ENCODE measurements at regions of chr16 and their contacts with region 1.

Region 1: DNA sequence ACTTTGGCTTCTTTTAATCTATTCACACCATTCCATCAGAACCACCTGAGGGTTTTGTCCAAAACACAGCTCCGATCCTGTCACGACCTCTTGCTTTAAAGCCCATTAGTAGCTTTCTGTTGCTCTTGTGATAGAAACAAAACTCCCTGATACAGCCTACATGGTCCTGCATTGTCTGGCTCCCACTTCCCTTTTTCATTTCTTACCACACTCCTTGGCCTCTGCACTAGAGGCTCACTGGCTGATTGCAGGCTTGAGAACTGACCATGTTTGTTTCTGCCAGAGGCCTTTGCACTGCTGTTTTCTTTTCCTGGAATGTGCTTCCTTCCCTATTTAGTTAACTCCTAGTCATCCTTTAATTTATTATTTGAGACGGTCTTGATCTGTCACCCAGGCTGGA is 23.7 kb downstream of the IST1 start:
- DNase-seq: peak in 2 of 3 donors; percentile 40 to 45
- H3K4me3 ChIP-seq: peak overlapping the region in 1 of 7 experiments; percentile 15
- H3K27ac ChIP-seq: no peak overlapping the region
- H3K4me1 ChIP-seq: peaks cover 0 to 4% (median under 1%) of the 10 kb centered on the region in 4 experiments
- H3K27me3 ChIP-seq: no peaks in the 10 kb centered on the region

Region 2: DNA sequence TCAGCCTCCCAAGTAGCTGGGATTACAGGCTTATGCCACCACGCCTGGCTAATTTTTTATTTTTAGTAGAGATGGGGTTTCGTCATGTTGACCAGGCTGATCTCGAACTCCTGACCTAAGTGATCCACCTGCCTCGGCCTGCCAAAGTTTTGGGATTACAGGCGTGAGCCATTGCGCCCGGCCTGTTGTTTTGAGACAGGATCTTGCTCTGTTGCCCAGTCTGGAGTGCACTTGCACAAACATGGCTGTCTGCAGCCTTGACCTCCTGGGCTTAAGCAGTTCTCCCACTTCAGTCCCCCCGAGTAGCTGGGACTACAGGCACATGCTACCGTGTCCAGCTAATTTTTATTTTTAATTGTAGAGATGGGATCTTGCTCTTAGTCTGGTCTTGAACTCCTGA is 14.8 kb before region 1 on chr16:
- CTCF ChIA-PET with region 1: interaction called, 16 read pairs
- POLR2A ChIA-PET with region 1: interaction called, 3 read pairs
- DNase-seq: no peak
- H3K4me3 ChIP-seq: no peak overlapping the region
- H3K27ac ChIP-seq: no peak overlapping the region
- H3K4me1 ChIP-seq: peaks cover 0 to 34% (median 18%) of the 10 kb centered on the region in 4 experiments
- H3K27me3 ChIP-seq: no peaks in the 10 kb centered on the region

Region 3: GRCh38 chr16:71929048-71929447 is 10.0 kb after region 1 on chr16:
- CTCF ChIA-PET with region 1: interaction called, 13 read pairs
- POLR2A ChIA-PET with region 1: no interaction called
- DNase-seq: no peak
- H3K4me3 ChIP-seq: no peak overlapping the region
- H3K27ac ChIP-seq: no peak overlapping the region
- H3K4me1 ChIP-seq: peaks cover 0 to 5% (median 0%) of the 10 kb centered on the region in 4 experiments
- H3K27me3 ChIP-seq: no peaks in the 10 kb centered on the region

Measured in common myeloid progenitor, CD34-positive (primary cell).